Activated CD4-positive, alpha-beta T cell treated with anti-CD3 and anti-CD28 coated beads for 36 hours (primary cell): ENCODE measurements at regions of chr11 and their contacts with region 1.

Region 1: DNA sequence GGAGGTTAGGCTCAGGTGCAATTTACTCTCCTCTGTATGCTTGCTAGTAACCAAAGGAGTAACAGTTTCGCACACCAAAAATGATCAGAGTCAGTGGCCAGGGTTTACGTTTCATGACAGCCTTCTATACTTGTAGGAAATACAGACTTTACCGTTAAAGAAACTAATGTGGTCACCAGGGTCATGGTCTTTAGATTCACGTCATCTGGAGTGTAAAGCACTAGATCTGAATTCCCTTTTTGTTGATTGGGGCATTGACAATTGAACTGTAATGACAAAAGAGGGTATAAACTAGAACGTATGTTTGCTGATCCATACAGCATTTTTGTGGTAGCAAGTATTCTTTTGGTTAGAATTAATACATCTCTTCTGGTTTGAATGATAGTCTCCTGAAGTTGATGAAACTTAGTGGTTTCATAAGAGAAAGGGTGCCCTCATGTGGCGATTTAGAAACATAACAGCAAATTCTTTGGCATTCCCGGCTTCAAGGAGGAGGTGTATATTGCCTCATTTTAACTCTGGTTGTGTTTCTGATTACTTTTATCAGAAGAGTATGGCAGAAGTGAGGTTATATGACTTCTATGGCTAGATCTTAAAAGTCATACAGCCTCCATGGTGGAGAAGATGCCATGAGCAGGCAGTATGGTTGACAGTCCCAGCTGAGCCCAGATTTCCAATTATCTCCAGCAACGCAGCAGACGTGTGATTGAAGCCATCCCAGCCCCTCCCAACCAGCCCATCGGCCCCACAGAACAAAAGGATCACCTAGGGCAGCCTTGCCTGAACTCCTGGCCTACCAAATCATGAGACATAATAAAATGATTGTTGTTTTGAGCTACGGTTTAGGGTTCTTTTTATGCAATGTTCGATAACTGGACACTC is 35.1 kb downstream of the MMP7 start:
- DNase-seq: peak; percentile 40
- ATAC-seq: peak; percentile 68
- H3K4me3 Mint-ChIP-seq: no peak overlapping the region
- H3K27ac Mint-ChIP-seq: no peak overlapping the region
- H3K4me1 Mint-ChIP-seq: peaks cover 28% of the 10 kb centered on the region
- H3K27me3 Mint-ChIP-seq: peaks cover 4% of the 10 kb centered on the region

Region 2: DNA sequence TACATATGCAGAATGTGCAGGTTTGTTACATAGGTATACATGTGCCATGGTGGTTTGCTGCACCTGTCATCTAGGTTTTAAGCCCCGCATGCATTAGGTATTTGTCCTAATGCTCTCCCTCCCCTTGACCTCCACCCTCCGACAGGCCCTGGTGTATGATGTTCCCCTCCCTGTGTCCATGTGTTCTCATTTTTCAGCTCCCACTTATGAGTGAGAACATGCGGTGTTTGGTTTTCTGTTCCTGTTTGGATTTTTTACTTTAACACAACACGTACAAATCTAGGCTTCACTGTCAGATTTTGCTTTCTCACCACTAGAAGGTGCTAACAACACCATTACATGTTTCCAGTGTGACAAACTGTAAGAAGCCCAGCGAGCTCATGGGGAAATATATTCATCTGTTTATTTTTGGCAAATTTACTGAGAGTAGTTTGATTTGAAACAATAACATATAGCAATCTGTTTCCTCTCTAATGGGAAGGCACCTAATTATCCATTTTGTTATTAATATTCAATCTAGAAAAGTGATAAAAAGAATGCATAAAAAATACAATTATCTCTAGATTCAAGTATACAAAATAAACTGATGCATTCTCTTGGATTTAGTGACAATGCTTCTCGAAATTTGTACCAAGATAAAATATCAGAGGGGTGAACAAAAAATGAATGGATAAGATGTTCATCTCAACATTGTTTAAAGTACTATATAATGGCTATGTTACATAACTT is 201.4 kb before region 1 on chr11:
- CTCF ChIA-PET with region 1: interaction called, 12 read pairs
- POLR2A ChIA-PET with region 1: no interaction called
- intact Hi-C with region 1: no loop called
- DNase-seq: no peak
- ATAC-seq: peak; percentile 95
- H3K4me3 Mint-ChIP-seq: peak overlapping the region; percentile 68
- H3K27ac Mint-ChIP-seq: peak overlapping the region; percentile 95
- H3K4me1 Mint-ChIP-seq: peaks cover 27% of the 10 kb centered on the region
- H3K27me3 Mint-ChIP-seq: no peaks in the 10 kb centered on the region

Region 3: DNA sequence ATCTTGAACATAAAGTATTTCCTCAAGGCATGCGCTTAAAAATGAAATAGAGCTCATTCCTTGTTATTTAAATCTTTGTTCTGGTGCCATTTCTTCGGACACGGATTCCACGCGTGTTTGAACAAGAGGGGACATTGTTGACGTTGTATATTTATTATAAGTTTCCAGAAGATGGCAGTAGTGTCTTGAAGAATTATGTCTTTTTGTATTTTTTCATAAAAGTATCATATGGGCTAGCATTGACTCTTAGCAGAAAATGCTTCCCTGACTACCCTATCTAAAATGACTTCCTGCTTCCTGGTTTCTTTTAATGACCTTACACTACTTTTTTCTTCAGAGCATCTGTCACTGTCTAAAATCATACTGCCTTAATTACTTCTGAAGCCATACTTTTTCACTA is 128.0 kb before region 1 on chr11:
- CTCF ChIA-PET with region 1: interaction called, 18 read pairs
- POLR2A ChIA-PET with region 1: no interaction called
- intact Hi-C with region 1: loop called (anchors 1 kb)
- DNase-seq: no peak
- ATAC-seq: peak; percentile 50
- H3K4me3 Mint-ChIP-seq: no peak overlapping the region
- H3K27ac Mint-ChIP-seq: no peak overlapping the region
- H3K4me1 Mint-ChIP-seq: peaks cover 27% of the 10 kb centered on the region
- H3K27me3 Mint-ChIP-seq: no peaks in the 10 kb centered on the region

Region 4: GRCh38 chr11:102410382-102410784 is 85.0 kb before region 1 on chr11:
- CTCF ChIA-PET with region 1: interaction called, 11 read pairs
- POLR2A ChIA-PET with region 1: no interaction called
- intact Hi-C with region 1: no loop called
- DNase-seq: no peak
- ATAC-seq: no peak
- H3K4me3 Mint-ChIP-seq: no peak overlapping the region
- H3K27ac Mint-ChIP-seq: no peak overlapping the region
- H3K4me1 Mint-ChIP-seq: peaks cover 88% of the 10 kb centered on the region
- H3K27me3 Mint-ChIP-seq: no peaks in the 10 kb centered on the region

Region 5: GRCh38 chr11:102459393-102459792 is 36.0 kb before region 1 on chr11:
- CTCF ChIA-PET with region 1: no interaction called
- POLR2A ChIA-PET with region 1: no interaction called
- intact Hi-C with region 1: no loop called
- DNase-seq: no peak
- ATAC-seq: no peak
- H3K4me3 Mint-ChIP-seq: no peak overlapping the region
- H3K27ac Mint-ChIP-seq: peak overlapping the region; percentile 65
- H3K4me1 Mint-ChIP-seq: peaks cover 69% of the 10 kb centered on the region
- H3K27me3 Mint-ChIP-seq: no peaks in the 10 kb centered on the region

Region 6: GRCh38 chr11:102476812-102477211 is 18.6 kb before region 1 on chr11:
- CTCF ChIA-PET with region 1: interaction called, 16 read pairs
- POLR2A ChIA-PET with region 1: no interaction called
- intact Hi-C with region 1: no loop called
- DNase-seq: peak; percentile 74
- ATAC-seq: peak; percentile 86
- H3K4me3 Mint-ChIP-seq: peak overlapping the region; percentile 1
- H3K27ac Mint-ChIP-seq: peak overlapping the region; percentile 81
- H3K4me1 Mint-ChIP-seq: peaks cover 64% of the 10 kb centered on the region
- H3K27me3 Mint-ChIP-seq: no peaks in the 10 kb centered on the region

Region 7: DNA sequence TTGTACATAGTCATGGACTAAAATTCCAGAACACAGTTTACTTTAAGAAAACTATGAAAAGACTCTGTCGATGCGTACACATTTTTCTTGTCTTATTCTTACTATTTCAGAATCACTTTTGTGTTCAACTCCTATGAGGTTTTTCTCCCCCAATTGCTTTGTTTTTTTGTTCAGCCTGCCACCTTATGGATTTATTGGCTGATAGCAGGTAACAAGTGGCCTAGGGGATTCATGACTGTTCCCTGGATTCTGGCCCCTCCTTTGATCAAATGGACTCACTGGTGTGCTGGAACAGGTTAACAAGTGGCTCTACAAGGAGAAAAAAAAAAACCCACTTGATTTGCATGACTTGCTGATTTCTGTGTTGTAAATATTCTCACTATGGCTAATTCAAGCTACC is 119.1 kb after region 1 on chr11:
- CTCF ChIA-PET with region 1: interaction called, 23 read pairs
- POLR2A ChIA-PET with region 1: no interaction called
- intact Hi-C with region 1: loop called (anchors 1 to 2 kb)
- DNase-seq: no peak
- ATAC-seq: no peak
- H3K4me3 Mint-ChIP-seq: no peak overlapping the region
- H3K27ac Mint-ChIP-seq: no peak overlapping the region
- H3K4me1 Mint-ChIP-seq: peaks cover 13% of the 10 kb centered on the region
- H3K27me3 Mint-ChIP-seq: no peaks in the 10 kb centered on the region

Region 8: GRCh38 chr11:102666331-102666957 is 171.0 kb after region 1 on chr11:
- CTCF ChIA-PET with region 1: interaction called, 11 read pairs
- POLR2A ChIA-PET with region 1: no interaction called
- intact Hi-C with region 1: loop called in 1 of 2 experiments (anchors 1 kb)
- DNase-seq: peak; percentile 37
- ATAC-seq: peak; percentile 64
- H3K4me3 Mint-ChIP-seq: no peak overlapping the region
- H3K27ac Mint-ChIP-seq: no peak overlapping the region
- H3K4me1 Mint-ChIP-seq: no peaks in the 10 kb centered on the region
- H3K27me3 Mint-ChIP-seq: peaks cover 2% of the 10 kb centered on the region